Motor neuron (in vitro differentiated cells): ENCODE measurements at regions of chr10 and their contacts with region 1.

Region 1: GRCh38 chr10:35781643-35782035 is 139.5 kb upstream of the FZD8 start:
- ATAC-seq: no peak
- H3K4me3 ChIP-seq: no peak overlapping the region
- H3K27ac ChIP-seq: no peak overlapping the region
- H3K4me1 ChIP-seq: no peaks in the 10 kb centered on the region

Region 2: GRCh38 chr10:35961501-35961900 is 179.9 kb after region 1 on chr10:
- in situ Hi-C with region 1: no loop called
- ATAC-seq: no peak
- H3K4me3 ChIP-seq: no peak overlapping the region
- H3K27ac ChIP-seq: no peak overlapping the region
- H3K4me1 ChIP-seq: peaks cover 0 to 4% of the 10 kb centered on the region in 2 donors

Region 3: DNA sequence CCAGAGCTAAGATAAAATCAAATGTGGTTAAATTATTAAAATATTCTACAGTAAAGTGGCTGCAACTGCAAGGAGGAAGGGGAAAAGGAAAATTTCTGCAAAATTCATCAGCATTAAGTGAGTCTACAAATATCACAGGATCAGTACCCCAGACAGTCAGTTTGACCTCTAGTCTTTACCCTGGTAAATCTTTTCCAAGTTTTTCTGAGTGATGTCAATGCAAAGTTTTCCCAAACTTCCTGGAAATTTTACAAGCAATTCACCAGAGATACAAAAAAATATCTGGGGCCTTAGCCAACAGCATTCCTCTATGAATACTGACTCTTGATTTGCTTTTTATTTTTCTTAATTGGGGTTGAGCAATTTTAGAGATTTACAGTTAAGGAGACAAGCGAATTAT is 399.8 kb after region 1 on chr10:
- in situ Hi-C with region 1: loop called in 1 of 9 experiments (anchors 25 kb)
- ATAC-seq: no peak
- H3K4me3 ChIP-seq: no peak overlapping the region
- H3K27ac ChIP-seq: no peak overlapping the region
- H3K4me1 ChIP-seq: no peaks in the 10 kb centered on the region